ENCODE measurements at regions of chr6 and their contacts with region 1.

Region 1: GRCh38 chr6:52664186-52664990 is 6.5 kb upstream of the TMEM14A start:
- DNase-seq: peak; percentile 30 to 50 (median 43)
- H3K4me3 ChIP-seq: peak overlapping the region; percentile 20 to 79 (median 34)
- H3K4me3 Mint-ChIP-seq: no peak overlapping the region
- H3K27ac ChIP-seq: no peak overlapping the region
- H3K27ac Mint-ChIP-seq: no peak overlapping the region
- H3K4me1 ChIP-seq: peaks cover 21 to 35% of the 10 kb centered on the region in 2 donors
- H3K4me1 Mint-ChIP-seq: peaks cover 14% of the 10 kb centered on the region
- H3K27me3 ChIP-seq: peaks cover 13 to 27% of the 10 kb centered on the region in 2 donors
- H3K27me3 Mint-ChIP-seq: peaks cover under 1 to 11% (median 7%) of the 10 kb centered on the region in 3 donors
- CTCF ChIP-seq: no peak

Region 2: GRCh38 chr6:52304983-52305390 is 359.4 kb before region 1 on chr6:
- intact Hi-C with region 1: loop called in 1 of 2 experiments (anchors 10 kb)
- DNase-seq: peak; percentile 69 to 87 (median 76)
- H3K4me3 ChIP-seq: peak overlapping the region; percentile 10 to 69 (median 42)
- H3K4me3 Mint-ChIP-seq: peak overlapping the region; percentile 59 to 75
- H3K27ac ChIP-seq: peak overlapping the region; percentile 86 to 92
- H3K27ac Mint-ChIP-seq: peak overlapping the region; percentile 89 to 98 (median 96)
- H3K4me1 ChIP-seq: peaks cover 54 to 63% of the 10 kb centered on the region in 2 donors
- H3K4me1 Mint-ChIP-seq: peaks cover 58% of the 10 kb centered on the region
- H3K27me3 ChIP-seq: no peaks in the 10 kb centered on the region
- H3K27me3 Mint-ChIP-seq: no peaks in the 10 kb centered on the region
- CTCF ChIP-seq: no peak

Region 3: GRCh38 chr6:52577022-52577777 is 87.2 kb before region 1 on chr6 and contains the start of gene TRAM2:
- intact Hi-C with region 1: loop called (anchors 10 kb)
- DNase-seq: peak; percentile 57 to 66 (median 62)
- H3K4me3 ChIP-seq: peak within 1 kb of the TSS; percentile 78 to 87 (median 86)
- H3K4me3 Mint-ChIP-seq: peak within 1 kb of the TSS; percentile 88 to 95
- H3K27ac ChIP-seq: peak within 1 kb of the TSS; percentile 62 to 81
- H3K27ac Mint-ChIP-seq: peak within 1 kb of the TSS; percentile 75 to 88 (median 84)
- H3K4me1 ChIP-seq: peaks cover 39 to 51% of the 10 kb centered on the region in 2 donors
- H3K4me1 Mint-ChIP-seq: peaks cover 53% of the 10 kb centered on the region
- H3K27me3 ChIP-seq: no peaks in the 10 kb centered on the region
- H3K27me3 Mint-ChIP-seq: peaks cover 0 to 2% (median 0%) of the 10 kb centered on the region in 3 donors
- CTCF ChIP-seq: no peak
- polyA plus RNA-seq, gene TRAM2: 4.7 to 11.7 (median 5.9) TPM

Region 4: DNA sequence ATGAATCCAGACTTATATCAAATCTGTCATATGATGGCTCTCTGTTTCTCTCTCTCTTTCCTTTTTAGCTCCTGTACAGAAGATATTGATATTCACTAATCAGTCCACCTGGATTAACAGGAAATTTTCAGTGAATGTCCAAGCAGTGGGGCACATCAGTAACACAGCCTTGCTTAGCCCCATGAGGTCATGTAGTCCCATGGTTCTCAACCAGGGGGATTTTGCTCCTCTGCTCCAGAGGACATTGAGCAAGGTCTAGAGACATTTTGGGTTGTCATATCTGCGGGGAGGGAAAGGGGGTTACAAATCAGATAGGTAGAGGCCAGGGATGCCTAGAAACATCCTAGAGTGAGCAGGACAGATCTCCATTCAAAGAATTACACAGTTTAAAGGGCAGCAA is 138.4 kb after region 1 on chr6:
- intact Hi-C with region 1: no loop called
- DNase-seq: no peak
- H3K4me3 ChIP-seq: no peak overlapping the region
- H3K4me3 Mint-ChIP-seq: no peak overlapping the region
- H3K27ac ChIP-seq: no peak overlapping the region
- H3K27ac Mint-ChIP-seq: no peak overlapping the region
- H3K4me1 ChIP-seq: no peaks in the 10 kb centered on the region
- H3K4me1 Mint-ChIP-seq: no peaks in the 10 kb centered on the region
- H3K27me3 ChIP-seq: no peaks in the 10 kb centered on the region
- H3K27me3 Mint-ChIP-seq: peaks cover 0 to 8% (median 4%) of the 10 kb centered on the region in 3 donors
- CTCF ChIP-seq: no peak

Region 5: GRCh38 chr6:53095716-53096115 is 431.3 kb after region 1 on chr6:
- intact Hi-C with region 1: no loop called
- DNase-seq: no peak
- H3K4me3 ChIP-seq: no peak overlapping the region
- H3K4me3 Mint-ChIP-seq: no peak overlapping the region
- H3K27ac ChIP-seq: no peak overlapping the region
- H3K27ac Mint-ChIP-seq: peak overlapping the region in 1 of 7 donors; percentile 57
- H3K4me1 ChIP-seq: no peaks in the 10 kb centered on the region
- H3K4me1 Mint-ChIP-seq: no peaks in the 10 kb centered on the region
- H3K27me3 ChIP-seq: no peaks in the 10 kb centered on the region
- H3K27me3 Mint-ChIP-seq: no peaks in the 10 kb centered on the region
- CTCF ChIP-seq: no peak

Region 6: GRCh38 chr6:54238396-54238795 is 1574.0 kb after region 1 on chr6:
- intact Hi-C with region 1: no loop called
- DNase-seq: no peak
- H3K4me3 ChIP-seq: no peak overlapping the region
- H3K4me3 Mint-ChIP-seq: no peak overlapping the region
- H3K27ac ChIP-seq: no peak overlapping the region
- H3K27ac Mint-ChIP-seq: no peak overlapping the region
- H3K4me1 ChIP-seq: no peaks in the 10 kb centered on the region
- H3K4me1 Mint-ChIP-seq: no peaks in the 10 kb centered on the region
- H3K27me3 ChIP-seq: no peaks in the 10 kb centered on the region
- H3K27me3 Mint-ChIP-seq: peaks cover 0 to 1% (median 0%) of the 10 kb centered on the region in 3 donors
- CTCF ChIP-seq: no peak